AG04450 (cell line): ENCODE measurements at regions of chr19 and their contacts with region 1.

Region 1: GRCh38 chr19:18000935-18001778 is 6.8 kb upstream of the ARRDC2 start:
- DNase-seq: no peak
- H3K4me3 ChIP-seq: peak overlapping the region; percentile 66
- H3K27ac ChIP-seq: no peak overlapping the region
- H3K27me3 ChIP-seq: no peaks in the 10 kb centered on the region
- CTCF ChIP-seq: no peak

Region 2: GRCh38 chr19:17871878-17872250 is 129.3 kb before region 1 on chr19 and contains the start of gene SLC5A5:
- CTCF ChIA-PET with region 1: interaction called, 13 read pairs
- POLR2A ChIA-PET with region 1: no interaction called
- DNase-seq: no peak
- H3K4me3 ChIP-seq: no peak within 1 kb of the TSS
- H3K27ac ChIP-seq: no peak within 1 kb of the TSS
- H3K27me3 ChIP-seq: peaks cover 57% of the 10 kb centered on the region
- CTCF ChIP-seq: no peak
- polyA plus RNA-seq, gene SLC5A5: not detected in 2 replicates

Region 3: GRCh38 chr19:17938092-17938845 is 62.9 kb before region 1 on chr19:
- CTCF ChIA-PET with region 1: interaction called, 246 read pairs
- POLR2A ChIA-PET with region 1: interaction called, 4 read pairs
- DNase-seq: peak; percentile 65
- H3K4me3 ChIP-seq: no peak overlapping the region
- H3K27ac ChIP-seq: no peak overlapping the region
- H3K27me3 ChIP-seq: no peaks in the 10 kb centered on the region
- CTCF ChIP-seq: peak; percentile 94

Region 4: DNA sequence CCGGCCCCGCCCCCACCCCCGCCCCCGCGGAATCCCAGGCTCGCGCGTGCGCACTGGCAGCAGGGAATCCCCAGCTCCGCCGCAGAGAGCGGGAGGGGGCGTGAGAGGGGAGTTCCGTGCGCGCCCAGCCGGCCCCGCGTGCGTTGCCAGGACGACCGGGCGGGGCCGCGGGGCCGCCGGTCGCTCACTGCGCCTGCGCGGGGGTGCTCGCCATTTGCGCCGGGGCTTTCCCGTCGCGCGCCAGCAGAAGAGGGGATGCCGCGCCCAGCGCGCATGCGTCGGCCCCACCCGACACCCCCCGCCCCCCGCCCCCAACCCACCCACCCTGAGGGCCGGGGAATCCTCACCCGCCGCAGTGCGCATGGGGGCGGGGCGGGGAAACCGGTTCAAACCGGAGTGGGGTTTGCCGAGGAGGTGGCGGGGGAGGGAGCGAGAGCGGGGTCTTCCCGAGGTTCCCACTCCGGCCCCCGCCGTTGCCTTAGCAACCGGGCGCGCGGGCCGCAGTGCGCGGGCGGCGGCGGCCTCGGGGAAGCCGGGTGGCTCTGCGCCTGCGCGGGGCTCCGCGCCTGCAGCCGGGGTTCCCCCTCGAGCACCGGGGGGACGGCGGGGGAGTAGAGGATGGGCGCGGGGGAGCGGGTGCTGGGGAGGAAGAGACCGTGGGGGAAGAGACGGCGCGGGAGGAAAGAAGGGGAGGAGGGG is 53.2 kb before region 1 on chr19:
- CTCF ChIA-PET with region 1: interaction called, 84 read pairs
- POLR2A ChIA-PET with region 1: interaction called, 7 read pairs
- DNase-seq: peak; percentile 70
- H3K4me3 ChIP-seq: peak overlapping the region; percentile 61
- H3K27ac ChIP-seq: no peak overlapping the region
- H3K27me3 ChIP-seq: peaks cover 39% of the 10 kb centered on the region
- CTCF ChIP-seq: no peak

Region 5: DNA sequence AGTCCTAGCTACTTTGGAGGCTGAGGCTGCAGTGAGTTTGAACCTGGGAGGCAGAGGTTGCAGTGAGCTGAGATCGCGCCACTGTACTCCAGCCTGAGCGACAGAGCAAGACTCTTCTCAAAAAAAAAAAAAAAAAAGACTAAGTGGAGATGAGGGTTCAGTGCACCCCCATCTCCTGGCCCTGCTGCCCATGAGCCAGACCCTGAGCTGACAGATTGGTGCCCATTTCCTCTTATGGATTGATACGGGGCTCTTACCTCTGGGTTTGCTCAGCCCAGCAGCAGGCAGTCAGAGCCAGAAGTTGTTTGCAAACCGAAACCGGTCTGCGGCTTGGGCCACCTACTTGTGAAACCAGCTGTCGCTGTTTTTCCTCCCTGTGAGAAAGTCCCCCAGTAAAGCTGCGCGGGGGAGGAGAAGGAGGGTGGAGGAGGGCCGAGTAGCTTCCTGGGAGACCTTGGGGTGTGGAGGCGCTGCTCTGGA is 43.7 kb after region 1 on chr19:
- CTCF ChIA-PET with region 1: no interaction called
- POLR2A ChIA-PET with region 1: no interaction called
- DNase-seq: no peak
- H3K4me3 ChIP-seq: peak overlapping the region; percentile 46
- H3K27ac ChIP-seq: peak overlapping the region; percentile 11
- H3K27me3 ChIP-seq: peaks cover 5% of the 10 kb centered on the region
- CTCF ChIP-seq: no peak

Region 6: DNA sequence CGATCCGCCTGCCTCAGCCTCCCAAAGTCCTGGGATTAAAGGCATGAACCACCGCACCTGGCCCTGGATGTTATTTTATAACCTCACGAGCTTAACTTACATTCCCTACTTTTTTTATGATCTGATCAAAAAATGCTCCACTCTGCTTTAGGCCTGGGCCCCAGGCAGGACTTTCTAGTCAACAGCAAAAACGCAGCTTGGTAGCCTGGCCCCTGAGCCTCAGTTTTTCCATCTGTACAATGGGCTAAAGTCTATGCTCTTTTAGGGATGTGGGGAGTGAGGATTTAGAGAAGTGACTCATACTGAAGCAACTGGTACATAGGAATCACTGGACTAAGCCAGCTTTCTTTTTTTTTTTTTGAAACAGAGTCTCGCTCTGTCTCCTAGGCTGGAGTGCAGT is 139.9 kb after region 1 on chr19:
- CTCF ChIA-PET with region 1: no interaction called
- POLR2A ChIA-PET with region 1: interaction called, 13 read pairs
- DNase-seq: no peak
- H3K4me3 ChIP-seq: no peak overlapping the region
- H3K27ac ChIP-seq: no peak overlapping the region
- H3K27me3 ChIP-seq: no peaks in the 10 kb centered on the region
- CTCF ChIP-seq: no peak